ENCODE measurements at regions of chr6 and their contacts with region 1.

Region 1: DNA sequence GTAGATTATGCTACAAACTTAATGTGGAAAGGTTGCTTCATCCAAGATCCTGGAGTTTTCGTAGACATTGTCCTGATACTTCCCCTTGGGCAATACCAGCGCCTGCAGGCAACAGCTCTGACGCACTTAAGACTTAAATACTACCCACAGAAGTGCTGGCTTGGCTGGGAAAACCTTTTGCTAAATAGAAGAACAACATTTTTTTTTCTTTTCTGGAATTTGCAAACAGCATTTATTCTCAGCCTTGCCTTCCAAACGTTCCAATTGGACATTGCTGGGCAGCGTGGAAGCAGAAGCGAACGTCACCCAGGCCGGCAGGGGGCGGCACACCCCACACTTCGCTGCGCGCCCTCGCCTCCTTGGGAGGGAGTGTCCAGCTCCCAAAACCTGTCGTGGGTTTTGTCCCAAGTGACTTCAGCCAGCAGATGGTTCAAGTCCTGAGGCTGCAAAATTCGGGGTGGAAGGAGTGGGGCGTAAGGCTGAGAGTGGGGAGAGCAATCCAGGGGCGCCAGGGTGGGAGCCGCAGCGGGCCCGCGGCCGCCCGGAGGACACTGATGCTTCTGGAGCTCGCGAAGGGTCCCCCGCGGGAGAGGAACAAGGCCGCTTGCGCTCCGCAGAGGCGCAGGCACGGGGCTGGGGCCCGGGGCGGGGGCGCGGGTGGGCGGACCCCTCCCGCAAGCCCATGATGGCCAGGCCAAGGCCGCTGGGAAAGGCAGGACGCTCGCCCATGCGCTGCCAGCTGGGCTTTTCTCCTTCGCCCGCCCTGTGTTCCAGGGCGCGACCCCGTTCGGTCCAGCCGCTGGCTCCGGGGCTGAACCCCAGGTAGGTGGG is 60.8 kb upstream of the MAP3K4 start:
- DNase-seq: peak; percentile 10 to 86
- H3K4me3 ChIP-seq: peak overlapping the region; percentile 59 to 67
- H3K27ac ChIP-seq: no peak overlapping the region
- H3K4me1 ChIP-seq: peaks cover 0 to 3% of the 10 kb centered on the region in 2 donors
- H3K27me3 ChIP-seq: no peaks in the 10 kb centered on the region
- CTCF ChIP-seq: peak; percentile 86 to 93 (median 88)

Region 2: GRCh38 chr6:160992061-160992979 is 61.6 kb after region 1 on chr6:
- intact Hi-C with region 1: loop called (anchors 1 kb)
- DNase-seq: no peak
- H3K4me3 ChIP-seq: peak overlapping the region; percentile 81 to 85
- H3K27ac ChIP-seq: peak overlapping the region; percentile 90 to 95
- H3K4me1 ChIP-seq: peaks cover 2 to 11% of the 10 kb centered on the region in 2 donors
- H3K27me3 ChIP-seq: no peaks in the 10 kb centered on the region
- CTCF ChIP-seq: peak; percentile 29 to 60 (median 53)

Region 3: GRCh38 chr6:161101517-161101916 is 170.8 kb after region 1 on chr6:
- intact Hi-C with region 1: loop called (anchors 10 kb)
- DNase-seq: no peak
- H3K4me3 ChIP-seq: no peak overlapping the region
- H3K27ac ChIP-seq: no peak overlapping the region
- H3K4me1 ChIP-seq: peaks cover 0 to 4% of the 10 kb centered on the region in 2 donors
- H3K27me3 ChIP-seq: no peaks in the 10 kb centered on the region
- CTCF ChIP-seq: no peak

Region 4: DNA sequence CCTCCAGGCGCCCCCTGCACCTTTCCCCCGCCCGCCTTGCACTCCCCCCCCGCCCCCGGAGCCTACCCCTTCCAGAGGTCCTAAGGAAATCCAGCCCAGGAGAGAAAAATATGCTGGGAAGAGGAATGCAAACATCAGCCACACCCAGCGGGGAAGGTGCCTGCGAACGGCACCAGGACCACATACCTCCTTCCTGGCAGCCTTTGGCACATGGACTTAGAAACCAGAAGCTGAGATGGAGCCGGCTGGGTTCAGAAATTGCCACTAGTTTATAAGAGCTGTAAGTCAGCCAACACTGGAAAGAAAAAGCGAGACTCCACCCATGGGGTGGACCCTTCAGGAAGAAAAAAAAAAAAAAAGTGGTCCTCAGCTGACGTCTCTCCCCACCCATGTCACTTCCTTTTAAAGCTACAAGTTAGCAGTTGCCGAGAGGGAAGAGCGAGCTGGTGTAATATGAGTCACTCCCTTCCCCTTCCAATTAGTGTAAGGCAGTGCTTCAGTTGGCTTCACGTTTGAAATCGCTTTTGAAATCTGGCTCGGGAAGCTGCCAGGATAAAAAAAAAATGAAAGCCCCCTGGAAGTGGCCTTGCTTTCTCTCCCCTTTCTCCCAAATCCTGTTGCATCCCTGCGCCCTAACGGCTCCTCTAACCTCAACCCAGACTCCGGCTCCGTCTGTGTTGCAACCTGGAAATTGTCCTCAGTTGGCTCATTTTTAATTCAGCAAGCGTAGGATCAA is 343.2 kb after region 1 on chr6 and contains the start of gene AGPAT4:
- intact Hi-C with region 1: loop called (anchors 10 kb)
- DNase-seq: peak; percentile 44 to 90
- H3K4me3 ChIP-seq: peak within 1 kb of the TSS; percentile 74 to 79
- H3K27ac ChIP-seq: peak within 1 kb of the TSS; percentile 56 to 71
- H3K4me1 ChIP-seq: peaks cover 0 to 4% of the 10 kb centered on the region in 2 donors
- H3K27me3 ChIP-seq: no peaks in the 10 kb centered on the region
- CTCF ChIP-seq: no peak
- total RNA-seq, gene AGPAT4: 6.8 TPM

Region 5: DNA sequence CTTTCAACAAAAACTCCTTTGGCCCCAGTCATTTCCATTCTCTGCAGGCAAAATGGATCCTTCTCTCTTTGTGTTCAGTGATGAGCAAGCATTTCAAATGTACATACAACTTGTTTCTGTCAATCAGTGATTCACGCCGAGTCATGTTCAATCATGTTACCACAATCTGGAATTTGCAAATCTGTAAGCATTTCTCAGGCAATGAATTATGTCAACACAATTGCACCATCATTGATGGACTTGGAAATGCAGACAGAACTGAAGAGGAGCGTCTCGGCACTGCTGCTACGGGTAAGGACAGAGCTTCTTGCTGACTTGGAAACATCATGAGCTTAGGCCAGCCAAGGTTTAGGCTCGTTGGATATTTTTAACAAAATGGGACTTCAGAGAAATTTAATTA is 475.9 kb after region 1 on chr6:
- intact Hi-C with region 1: no loop called
- DNase-seq: no peak
- H3K4me3 ChIP-seq: no peak overlapping the region
- H3K27ac ChIP-seq: no peak overlapping the region
- H3K4me1 ChIP-seq: no peaks in the 10 kb centered on the region
- H3K27me3 ChIP-seq: no peaks in the 10 kb centered on the region
- CTCF ChIP-seq: no peak

Measured in ascending aorta (tissue), 2 donors.